Activated CD8-positive, alpha-beta memory T cell treated with anti-CD3 and anti-CD28 coated beads, Interleukin-2, amount 10 ng/mL, durations not matched to agents 7 days and 5 days (primary cell): ENCODE measurements at regions of chr3 and their contacts with region 1.

Region 1: GRCh38 chr3:157136647-157137387 is 23.1 kb downstream of the CCNL1 start:
- DNase-seq: peak; percentile 39
- ATAC-seq: peak; percentile 5
- H3K4me3 Mint-ChIP-seq: no peak overlapping the region
- H3K27ac Mint-ChIP-seq: peak overlapping the region; percentile 93
- H3K4me1 Mint-ChIP-seq: peaks cover 59% of the 10 kb centered on the region
- H3K27me3 Mint-ChIP-seq: no peaks in the 10 kb centered on the region

Region 2: DNA sequence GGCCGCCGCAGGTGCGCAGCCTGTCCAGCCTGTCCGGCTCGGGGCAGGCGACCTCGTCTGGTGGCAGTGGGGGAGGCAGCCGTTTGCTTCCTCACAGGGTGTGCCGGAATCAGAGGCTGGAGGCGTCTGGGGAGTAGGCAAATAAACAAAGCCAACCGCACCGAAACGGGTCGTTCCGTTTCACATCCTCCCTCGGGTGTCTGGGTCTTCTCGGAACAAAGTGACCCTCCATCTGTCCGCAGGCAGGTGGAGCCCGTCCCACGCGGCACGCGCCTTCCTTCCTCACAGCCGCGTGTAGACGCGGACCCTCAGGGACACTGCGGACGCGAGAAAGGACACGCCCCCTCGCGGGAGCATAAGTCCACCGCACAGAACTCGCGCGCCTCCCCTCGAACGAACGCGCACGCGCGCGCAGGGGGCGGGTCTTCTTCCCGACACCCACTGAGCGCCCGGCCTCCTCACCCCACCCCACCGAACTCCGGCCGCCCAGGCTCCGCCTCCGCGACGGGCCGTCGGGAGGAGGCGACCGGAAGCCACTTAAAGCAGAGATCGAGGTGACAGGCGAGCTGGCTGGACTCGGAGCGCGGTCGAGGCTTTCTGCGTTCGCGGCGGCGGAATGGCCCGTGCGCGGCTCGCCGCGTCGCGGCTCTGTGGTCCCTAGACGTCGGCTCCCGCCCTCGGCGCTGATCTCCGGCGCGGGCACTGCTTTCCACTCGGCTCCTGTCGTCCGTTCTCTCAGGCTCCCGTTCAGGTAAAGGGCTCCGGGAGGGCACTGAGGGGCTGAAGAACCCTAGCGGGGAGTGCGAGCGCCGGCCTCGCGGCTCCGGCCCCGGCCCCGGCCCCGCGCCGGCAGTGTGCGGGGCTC is 462.5 kb before region 1 on chr3 and contains the start of gene TIPARP:
- CTCF ChIA-PET with region 1: interaction called, 19 read pairs
- DNase-seq: peak; percentile 99
- ATAC-seq: peak; percentile 83
- H3K4me3 Mint-ChIP-seq: peak within 1 kb of the TSS; percentile 96
- H3K27ac Mint-ChIP-seq: peak within 1 kb of the TSS; percentile 96
- H3K4me1 Mint-ChIP-seq: peaks cover 41% of the 10 kb centered on the region
- H3K27me3 Mint-ChIP-seq: no peaks in the 10 kb centered on the region
- total RNA-seq, gene TIPARP: 31.6 to 42.8 TPM

Region 3: GRCh38 chr3:157023226-157023625 is 113.6 kb before region 1 on chr3:
- CTCF ChIA-PET with region 1: no interaction called
- DNase-seq: no peak
- ATAC-seq: no peak
- H3K4me3 Mint-ChIP-seq: no peak overlapping the region
- H3K27ac Mint-ChIP-seq: no peak overlapping the region
- H3K4me1 Mint-ChIP-seq: peaks cover 6% of the 10 kb centered on the region
- H3K27me3 Mint-ChIP-seq: peaks cover 3% of the 10 kb centered on the region

Region 4: GRCh38 chr3:157113832-157114505 is 22.8 kb before region 1 on chr3:
- CTCF ChIA-PET with region 1: interaction called, 14 read pairs
- DNase-seq: no peak
- ATAC-seq: no peak
- H3K4me3 Mint-ChIP-seq: no peak overlapping the region
- H3K27ac Mint-ChIP-seq: no peak overlapping the region
- H3K4me1 Mint-ChIP-seq: peaks cover 19% of the 10 kb centered on the region
- H3K27me3 Mint-ChIP-seq: no peaks in the 10 kb centered on the region

Region 5: GRCh38 chr3:157148196-157148889 is 11.5 kb after region 1 on chr3:
- CTCF ChIA-PET with region 1: interaction called, 51 read pairs
- DNase-seq: peak; percentile 41
- ATAC-seq: peak; percentile 15
- H3K4me3 Mint-ChIP-seq: no peak overlapping the region
- H3K27ac Mint-ChIP-seq: peak overlapping the region; percentile 43
- H3K4me1 Mint-ChIP-seq: peaks cover 49% of the 10 kb centered on the region
- H3K27me3 Mint-ChIP-seq: no peaks in the 10 kb centered on the region

Region 6: DNA sequence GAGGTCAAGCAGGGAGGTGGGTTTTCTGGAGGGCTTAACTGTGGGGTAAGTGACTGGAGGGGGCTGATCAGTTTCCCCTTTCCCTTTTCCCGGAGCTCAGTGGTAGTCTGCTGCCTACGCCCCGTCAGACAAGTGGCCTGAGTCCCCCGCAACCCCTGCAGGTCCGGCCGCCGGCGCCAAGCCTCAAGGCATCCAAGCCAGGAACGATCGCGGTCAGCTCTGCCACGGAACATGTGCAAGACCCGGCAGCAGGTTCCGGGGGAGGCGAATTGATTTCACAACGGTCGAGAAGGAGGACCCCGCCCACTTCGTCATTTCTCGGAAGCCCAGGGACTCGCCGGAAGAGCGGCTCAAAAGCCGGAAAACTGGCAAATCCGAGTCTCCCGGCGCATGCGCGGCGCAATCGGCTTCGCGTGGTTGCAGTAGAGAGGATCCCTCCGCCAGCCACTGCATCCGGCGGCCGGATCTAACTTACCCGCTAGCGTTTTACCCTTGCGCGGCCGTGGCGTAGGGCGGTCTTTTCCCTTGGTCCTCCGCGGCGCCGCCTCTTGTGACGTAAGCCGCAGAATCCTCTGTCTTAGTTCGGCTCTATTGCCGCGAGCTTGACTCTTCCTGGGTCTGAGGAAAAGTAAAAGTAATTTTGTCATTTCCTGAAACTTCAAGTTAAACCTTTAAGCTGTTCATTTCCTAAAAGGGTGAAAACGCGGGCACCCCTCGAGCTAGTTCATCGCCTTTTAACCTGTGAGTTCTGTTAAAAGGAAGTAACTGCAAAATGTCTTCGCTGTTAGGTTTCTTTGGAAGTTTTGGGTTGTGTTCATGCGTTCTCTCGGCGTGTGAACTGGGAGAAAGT is 38.1 kb after region 1 on chr3:
- CTCF ChIA-PET with region 1: interaction called, 11 read pairs
- DNase-seq: peak; percentile 99
- ATAC-seq: peak; percentile 95
- H3K4me3 Mint-ChIP-seq: peak overlapping the region; percentile 95
- H3K27ac Mint-ChIP-seq: peak overlapping the region; percentile 97
- H3K4me1 Mint-ChIP-seq: peaks cover 20% of the 10 kb centered on the region
- H3K27me3 Mint-ChIP-seq: no peaks in the 10 kb centered on the region

Region 7: GRCh38 chr3:157354722-157355121 is 217.9 kb after region 1 on chr3:
- CTCF ChIA-PET with region 1: no interaction called
- DNase-seq: no peak
- ATAC-seq: no peak
- H3K4me3 Mint-ChIP-seq: no peak overlapping the region
- H3K27ac Mint-ChIP-seq: no peak overlapping the region
- H3K4me1 Mint-ChIP-seq: no peaks in the 10 kb centered on the region
- H3K27me3 Mint-ChIP-seq: no peaks in the 10 kb centered on the region